ENCODE measurements at regions of chr16 and their contacts with region 1.

Region 1: DNA sequence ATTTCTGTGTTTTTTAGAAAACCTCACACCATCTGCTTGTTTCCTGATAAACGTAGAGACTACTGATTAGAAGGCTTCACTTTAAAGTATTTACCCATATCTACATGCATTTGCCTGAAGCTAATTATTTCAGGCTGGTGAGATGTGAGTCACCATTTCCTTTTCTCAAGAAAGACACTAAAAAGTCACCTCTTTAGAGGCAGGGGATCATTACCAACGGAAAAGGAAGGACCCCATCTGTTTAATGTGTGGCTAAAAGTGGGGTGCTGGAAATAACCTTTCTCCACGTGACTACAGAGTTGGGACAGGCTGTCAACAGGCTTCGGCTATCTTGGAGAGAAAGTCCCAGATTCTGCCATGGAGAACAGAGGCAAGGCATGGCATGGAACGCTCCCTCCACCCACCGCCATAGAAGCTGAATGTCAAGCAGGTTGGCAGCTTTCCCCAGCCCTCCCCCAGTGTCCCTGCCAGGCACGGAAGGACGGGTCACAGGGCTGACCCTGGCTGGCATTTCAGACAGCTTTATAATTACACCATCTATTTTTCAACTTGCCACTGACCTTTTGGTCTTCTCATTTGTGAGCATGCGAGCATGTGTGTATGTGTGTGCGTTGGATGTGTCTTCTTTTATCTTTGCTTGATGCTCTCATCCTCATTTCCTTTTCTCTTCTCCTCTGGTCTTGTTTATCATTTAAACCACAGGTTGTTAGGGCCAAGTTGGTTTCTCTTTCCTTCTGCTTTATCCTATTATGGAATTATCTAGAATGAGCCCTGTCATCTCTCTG is 157.0 kb downstream of the CPPED1 start:
- DNase-seq: peak; percentile 94
- H3K4me3 ChIP-seq: no peak overlapping the region
- H3K27ac ChIP-seq: peak overlapping the region; percentile 67
- H3K4me1 ChIP-seq: peaks cover 29% of the 10 kb centered on the region
- H3K27me3 ChIP-seq: no peaks in the 10 kb centered on the region
- CTCF ChIP-seq: no peak
- POLR2A ChIP-seq: no peak

Region 2: GRCh38 chr16:12602811-12603698 is 43.6 kb before region 1 on chr16:
- CTCF ChIA-PET with region 1: no interaction called
- POLR2A ChIA-PET with region 1: no interaction called
- dilution Hi-C with region 1: no loop called
- intact Hi-C with region 1: no loop called
- DNase-seq: no peak
- H3K4me3 ChIP-seq: no peak overlapping the region
- H3K27ac ChIP-seq: no peak overlapping the region
- H3K4me1 ChIP-seq: no peaks in the 10 kb centered on the region
- H3K27me3 ChIP-seq: no peaks in the 10 kb centered on the region
- CTCF ChIP-seq: no peak
- POLR2A ChIP-seq: no peak

Region 3: DNA sequence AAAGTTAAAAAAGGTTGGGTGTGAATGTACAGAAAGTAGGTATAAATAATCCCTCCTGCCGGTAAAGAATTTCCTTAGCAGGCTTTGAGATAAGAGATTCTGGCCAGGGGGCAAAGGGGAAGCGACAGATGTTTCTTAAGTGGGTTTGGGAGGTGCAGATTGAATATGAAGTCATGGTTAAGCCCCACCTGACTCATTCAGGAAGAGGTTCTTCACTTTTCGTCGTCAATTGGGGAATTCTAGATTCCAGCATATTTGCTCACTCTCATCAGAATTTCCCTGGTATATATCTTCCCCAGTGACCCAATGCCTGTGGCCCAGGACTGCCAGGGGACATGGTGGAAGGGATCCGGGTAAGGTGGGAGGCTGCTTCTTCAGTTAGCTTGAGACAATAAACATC is 29.2 kb after region 1 on chr16:
- CTCF ChIA-PET with region 1: interaction called, 3 read pairs
- POLR2A ChIA-PET with region 1: interaction called, 3 read pairs
- dilution Hi-C with region 1: no loop called
- intact Hi-C with region 1: loop called (anchors 1 kb)
- DNase-seq: peak; percentile 91
- H3K4me3 ChIP-seq: no peak overlapping the region
- H3K27ac ChIP-seq: peak overlapping the region; percentile 51
- H3K4me1 ChIP-seq: peaks cover 33% of the 10 kb centered on the region
- H3K27me3 ChIP-seq: no peaks in the 10 kb centered on the region
- CTCF ChIP-seq: no peak
- POLR2A ChIP-seq: peak; percentile 58

Measured in endothelial cell of umbilical vein (primary cell).